GM10248 (cell line): ENCODE measurements at regions of chr2 and their contacts with region 1.

Region 1: GRCh38 chr2:8544786-8545694 is 136.8 kb upstream of the ID2 start:
- DNase-seq: peak; percentile 84
- CTCF ChIP-seq: peak; percentile 53

Region 2: DNA sequence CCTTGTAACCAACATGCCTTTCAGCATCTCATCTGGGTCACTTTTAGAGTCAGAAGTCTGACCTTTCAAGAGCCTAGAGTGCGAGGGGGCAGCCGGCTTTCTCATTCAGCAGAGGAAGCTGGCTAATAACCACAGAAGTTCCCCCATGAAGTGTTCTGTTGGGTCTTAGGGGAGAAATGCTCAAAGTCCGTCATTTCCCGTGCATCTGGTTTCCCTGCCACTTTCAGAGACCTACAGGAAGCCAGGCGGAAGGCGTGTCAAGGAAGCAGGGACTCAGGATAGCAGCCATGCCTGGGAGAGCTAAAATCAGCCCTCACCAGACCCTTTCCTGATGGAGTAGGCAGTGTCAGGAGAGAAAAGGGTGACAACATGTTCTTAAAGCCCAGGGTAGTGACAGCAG is 165.0 kb before region 1 on chr2:
- CTCF ChIA-PET with region 1: no interaction called
- POLR2A ChIA-PET with region 1: no interaction called
- DNase-seq: no peak
- CTCF ChIP-seq: no peak

Region 3: DNA sequence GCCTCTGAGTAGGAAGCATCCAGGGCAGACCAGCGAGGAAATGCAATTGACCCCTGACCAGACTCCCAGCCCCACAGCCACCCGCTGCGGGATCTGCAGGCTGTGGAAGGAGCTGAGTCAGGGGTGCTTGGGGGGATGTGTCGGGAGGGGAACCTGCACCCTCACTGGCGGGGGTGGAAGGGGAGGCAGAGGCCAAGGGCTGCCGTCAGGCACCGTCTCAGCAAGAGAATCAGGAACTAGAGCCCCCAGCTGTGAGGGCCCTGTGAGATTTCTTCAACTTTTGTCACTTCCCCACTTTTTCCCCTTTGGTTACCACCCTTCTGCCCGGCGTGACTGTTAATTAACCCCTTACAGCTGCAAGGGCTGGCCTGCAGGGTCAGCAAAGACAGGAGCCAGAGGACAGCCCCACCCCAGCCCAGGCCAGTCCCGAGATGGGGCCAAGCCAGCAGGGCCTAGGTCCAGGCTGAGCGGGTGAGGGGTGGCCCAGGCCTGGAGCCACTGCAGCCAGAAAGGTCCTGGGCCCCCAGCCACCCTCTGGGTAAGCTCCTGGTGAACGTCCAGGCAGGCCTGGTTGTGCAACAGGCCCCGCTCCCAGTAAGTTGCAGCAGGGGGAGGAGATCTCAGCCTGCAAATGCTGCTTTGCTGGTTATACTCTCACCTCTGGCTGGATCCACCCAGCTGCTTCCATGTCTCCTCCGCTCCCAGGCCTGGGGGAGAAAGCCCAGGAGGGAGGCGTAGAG is 10.1 kb before region 1 on chr2:
- CTCF ChIA-PET with region 1: interaction called, 16 read pairs
- POLR2A ChIA-PET with region 1: no interaction called
- DNase-seq: no peak
- CTCF ChIP-seq: no peak